ENCODE measurements at regions of chr1 and their contacts with region 1.

Region 1: GRCh38 chr1:201254625-201255506 is 28.4 kb upstream of the PKP1 start:
- DNase-seq: peak; percentile 78
- ATAC-seq: peak; percentile 87

Region 2: DNA sequence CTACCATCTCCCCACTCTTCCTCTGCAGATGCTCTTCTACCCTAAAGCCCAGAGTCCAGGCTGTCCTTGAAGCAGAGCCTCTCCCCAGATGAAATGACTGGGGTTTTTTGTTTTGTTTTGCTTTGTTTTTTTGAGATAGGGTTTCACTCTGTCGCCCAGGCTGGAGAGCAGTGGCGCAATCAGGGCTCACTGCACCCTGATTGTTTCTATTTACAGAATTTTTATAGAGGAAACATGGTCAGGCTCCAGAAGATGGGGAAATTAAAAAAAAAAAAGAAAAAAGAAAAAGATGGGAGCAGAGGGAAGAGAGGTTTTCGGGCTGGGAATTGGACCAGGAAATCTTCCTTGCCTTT is 801.3 kb before region 1 on chr1:
- intact Hi-C with region 1: no loop called
- DNase-seq: no peak
- ATAC-seq: no peak

Region 3: GRCh38 chr1:201299968-201300367 is 45.1 kb after region 1 on chr1:
- intact Hi-C with region 1: loop called (anchors 5 kb)
- DNase-seq: peak; percentile 60
- ATAC-seq: peak; percentile 87

Region 4: GRCh38 chr1:201348211-201348566 is 93.3 kb after region 1 on chr1:
- intact Hi-C with region 1: loop called (anchors 5 kb)
- DNase-seq: no peak
- ATAC-seq: peak; percentile 62

Region 5: GRCh38 chr1:201361652-201362504 is 107.0 kb after region 1 on chr1:
- intact Hi-C with region 1: loop called (anchors 5 kb)
- DNase-seq: peak; percentile 50
- ATAC-seq: no peak

Region 6: GRCh38 chr1:201414051-201414738 is 159.3 kb after region 1 on chr1:
- intact Hi-C with region 1: loop called (anchors 5 kb)
- DNase-seq: no peak
- ATAC-seq: no peak

Measured in Right ventricle myocardium superior (tissue), 1 donor.